Activated CD4-positive, alpha-beta T cell treated with anti-CD3 and anti-CD28 coated beads, Interleukin-2, amount 10 ng/mL, durations not matched to agents 24 days and 14 days (primary cell): ENCODE measurements at regions of chr1 and their contacts with region 1.

Region 1: DNA sequence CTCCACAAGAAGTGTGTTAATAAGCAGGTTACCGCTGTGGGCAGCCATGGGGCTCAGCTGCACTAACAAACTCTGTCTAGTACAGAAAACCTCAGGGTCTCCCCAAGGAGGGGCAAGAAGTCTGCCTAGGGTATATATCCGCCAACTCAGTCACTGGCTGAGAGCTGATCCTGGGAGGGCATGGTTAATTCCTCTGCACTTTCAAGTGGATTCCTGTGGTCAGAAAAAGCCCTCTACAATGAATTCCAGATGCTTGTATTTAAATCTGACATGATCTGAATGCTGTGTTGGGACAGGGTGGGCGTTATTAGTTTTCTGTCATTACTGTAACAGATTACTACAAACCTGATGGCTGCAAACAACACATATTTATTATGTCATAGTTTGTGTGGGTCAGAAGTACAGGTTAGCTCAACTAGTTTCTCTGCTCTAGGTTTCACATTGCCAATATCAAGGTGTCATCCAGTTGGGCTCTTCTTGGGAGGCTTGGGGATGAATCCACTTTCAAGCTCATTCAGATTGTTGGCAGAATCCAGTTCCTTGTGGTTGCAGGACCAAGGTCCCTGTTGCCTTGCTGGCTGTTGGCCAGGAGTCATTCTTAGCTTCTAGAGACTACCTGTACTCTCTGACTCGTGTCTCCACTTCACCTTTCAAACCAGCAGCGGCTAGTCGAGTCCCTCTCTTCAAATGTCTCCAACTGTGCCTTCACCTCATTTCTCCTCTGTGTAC is 8.0 kb upstream of the SELE start:
- DNase-seq: no peak
- H3K4me3 Mint-ChIP-seq: no peak overlapping the region
- H3K27ac Mint-ChIP-seq: no peak overlapping the region
- H3K4me1 Mint-ChIP-seq: no peaks in the 10 kb centered on the region
- H3K27me3 Mint-ChIP-seq: peaks cover 34% of the 10 kb centered on the region

Region 2: DNA sequence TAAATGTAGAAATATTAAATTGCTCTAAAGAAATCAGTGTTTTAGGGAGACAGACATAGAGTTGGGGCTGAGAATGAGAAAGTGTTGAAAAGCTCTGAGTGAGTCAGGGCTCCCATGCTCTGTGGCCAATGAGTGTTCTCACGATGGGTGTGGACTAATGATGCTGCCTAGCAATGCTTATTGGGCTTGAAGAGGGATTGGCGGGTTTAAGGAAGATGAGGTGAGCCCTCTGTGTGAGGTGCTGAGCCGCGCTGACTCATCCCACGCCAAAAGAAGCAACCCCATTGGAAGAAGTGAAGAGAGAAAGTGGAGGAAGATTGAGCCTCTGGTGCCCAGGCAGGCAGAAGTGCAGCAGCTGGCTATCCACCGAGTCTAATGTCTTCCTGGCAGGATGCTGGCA is 947.8 kb before region 1 on chr1:
- intact Hi-C with region 1: loop called (anchors 5 kb)
- DNase-seq: no peak
- H3K4me3 Mint-ChIP-seq: no peak overlapping the region
- H3K27ac Mint-ChIP-seq: no peak overlapping the region
- H3K4me1 Mint-ChIP-seq: no peaks in the 10 kb centered on the region
- H3K27me3 Mint-ChIP-seq: peaks cover 4% of the 10 kb centered on the region

Region 3: GRCh38 chr1:169722776-169723175 is 19.1 kb before region 1 on chr1:
- intact Hi-C with region 1: no loop called
- DNase-seq: no peak
- H3K4me3 Mint-ChIP-seq: no peak overlapping the region
- H3K27ac Mint-ChIP-seq: no peak overlapping the region
- H3K4me1 Mint-ChIP-seq: no peaks in the 10 kb centered on the region
- H3K27me3 Mint-ChIP-seq: peaks cover 24% of the 10 kb centered on the region